CD4-positive, alpha-beta memory T cell (primary cell): ENCODE measurements at regions of chr17 and their contacts with region 1.

Region 1: GRCh38 chr17:17141860-17142552 is 64.1 kb downstream of the PLD6 start:
- DNase-seq: peak; percentile 54 to 65 (median 56)
- H3K4me3 ChIP-seq: no peak overlapping the region
- H3K4me3 Mint-ChIP-seq: peak overlapping the region in 4 of 8 donors; percentile 15 to 42 (median 36)
- H3K27ac ChIP-seq: no peak overlapping the region
- H3K27ac Mint-ChIP-seq: peak overlapping the region; percentile 22 to 94 (median 85)
- H3K4me1 ChIP-seq: peaks cover 9% of the 10 kb centered on the region
- H3K4me1 Mint-ChIP-seq: peaks cover 9 to 18% (median 9%) of the 10 kb centered on the region in 4 donors
- H3K27me3 ChIP-seq: no peaks in the 10 kb centered on the region
- H3K27me3 Mint-ChIP-seq: no peaks in the 10 kb centered on the region

Region 2: DNA sequence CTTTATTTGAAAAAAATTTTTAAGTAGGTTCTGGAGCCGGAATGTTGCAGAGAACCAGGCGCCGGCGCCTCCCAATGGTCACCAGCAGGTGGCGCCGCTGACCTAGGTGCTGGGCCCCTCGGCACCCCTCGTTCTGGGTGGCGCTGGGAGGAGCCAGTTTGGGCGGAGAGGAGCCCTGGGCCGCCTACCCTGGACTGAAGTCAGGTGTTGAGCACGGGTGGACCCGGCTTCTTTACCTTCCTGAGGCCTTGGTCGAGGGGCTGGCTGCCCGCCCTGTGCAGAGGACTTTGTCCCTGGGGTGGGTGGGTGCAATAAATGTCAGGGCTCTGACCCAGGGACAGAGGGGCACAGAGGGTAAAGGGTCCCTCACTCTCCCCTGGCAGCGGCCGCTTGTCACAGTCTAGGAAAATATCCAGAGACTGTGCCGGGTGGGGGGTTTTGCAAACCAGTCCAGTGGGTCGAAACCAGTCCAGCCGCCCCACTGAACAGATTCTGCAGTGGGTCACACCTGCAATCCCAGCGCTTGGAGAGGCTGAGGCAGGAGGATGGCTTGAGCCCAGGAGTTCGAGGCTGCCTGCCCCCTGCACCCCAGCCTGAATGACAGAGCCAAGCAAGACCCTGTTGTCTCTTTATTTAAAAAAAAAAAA is 140.0 kb before region 1 on chr17:
- CTCF ChIA-PET with region 1: interaction called, 10 read pairs
- POLR2A ChIA-PET with region 1: no interaction called
- intact Hi-C with region 1: loop called (anchors 5 kb)
- DNase-seq: peak; percentile 62 to 76 (median 70)
- H3K4me3 ChIP-seq: no peak overlapping the region
- H3K4me3 Mint-ChIP-seq: no peak overlapping the region
- H3K27ac ChIP-seq: no peak overlapping the region
- H3K27ac Mint-ChIP-seq: no peak overlapping the region
- H3K4me1 ChIP-seq: no peaks in the 10 kb centered on the region
- H3K4me1 Mint-ChIP-seq: peaks cover 1 to 4% (median 3%) of the 10 kb centered on the region in 4 donors
- H3K27me3 ChIP-seq: no peaks in the 10 kb centered on the region
- H3K27me3 Mint-ChIP-seq: no peaks in the 10 kb centered on the region

Region 3: GRCh38 chr17:17119533-17119932 is 22.5 kb before region 1 on chr17:
- CTCF ChIA-PET with region 1: interaction called, 17 read pairs
- POLR2A ChIA-PET with region 1: interaction called, 6 read pairs
- intact Hi-C with region 1: no loop called
- DNase-seq: peak; percentile 69 to 93 (median 81)
- H3K4me3 ChIP-seq: no peak overlapping the region
- H3K4me3 Mint-ChIP-seq: peak overlapping the region; percentile 10 to 79 (median 66)
- H3K27ac ChIP-seq: peak overlapping the region; percentile 66
- H3K27ac Mint-ChIP-seq: peak overlapping the region; percentile 93 to 96 (median 95)
- H3K4me1 ChIP-seq: peaks cover 93% of the 10 kb centered on the region
- H3K4me1 Mint-ChIP-seq: peaks cover 62 to 95% (median 84%) of the 10 kb centered on the region in 4 donors
- H3K27me3 ChIP-seq: no peaks in the 10 kb centered on the region
- H3K27me3 Mint-ChIP-seq: no peaks in the 10 kb centered on the region

Region 4: DNA sequence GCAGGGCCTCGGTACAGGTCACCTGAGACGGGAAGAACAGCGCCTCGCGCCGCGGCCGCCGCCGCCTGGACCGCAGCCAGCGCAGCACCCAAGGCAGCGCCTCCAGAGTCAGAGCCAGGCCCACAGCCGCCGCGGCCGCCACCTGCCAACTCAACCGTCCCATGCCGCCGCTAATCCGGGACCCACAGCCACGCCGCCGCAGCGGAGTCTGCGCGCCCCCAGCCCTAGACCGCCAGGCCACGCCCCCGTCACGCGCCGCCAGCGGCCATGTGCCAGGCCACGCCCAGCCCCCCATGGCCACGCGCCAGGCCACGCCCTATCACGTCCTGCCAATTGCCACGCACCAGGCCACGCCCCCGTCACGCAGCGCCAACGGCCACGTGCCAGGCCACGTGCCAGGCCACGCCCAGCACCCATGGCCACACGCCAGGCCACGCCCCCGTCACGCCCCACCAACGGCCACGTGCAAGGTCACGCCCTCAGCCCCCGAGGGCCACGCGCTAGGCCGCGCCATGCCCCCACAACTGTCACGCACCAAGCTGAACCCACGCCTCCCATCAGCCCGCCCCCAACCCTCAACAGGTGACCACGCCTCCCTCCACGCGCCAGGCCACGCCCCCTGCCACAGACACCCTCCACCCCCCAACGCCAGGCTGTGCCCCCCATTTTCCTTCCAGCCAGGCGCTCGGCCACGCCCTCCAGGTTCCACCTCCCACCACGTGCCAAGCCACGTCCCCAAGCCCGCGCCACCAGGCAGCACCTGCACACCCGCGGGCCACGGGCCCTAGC is 64.3 kb after region 1 on chr17 and contains the start of gene PLD6:
- CTCF ChIA-PET with region 1: interaction called, 9 read pairs
- POLR2A ChIA-PET with region 1: interaction called, 6 read pairs
- intact Hi-C with region 1: loop called (anchors 5 kb)
- DNase-seq: peak; percentile 94 to 95 (median 95)
- H3K4me3 ChIP-seq: peak within 1 kb of the TSS; percentile 61 to 72
- H3K4me3 Mint-ChIP-seq: peak within 1 kb of the TSS; percentile 85 to 94 (median 90)
- H3K27ac ChIP-seq: peak within 1 kb of the TSS; percentile 72
- H3K27ac Mint-ChIP-seq: peak within 1 kb of the TSS; percentile 91 to 97 (median 96)
- H3K4me1 ChIP-seq: peaks cover 28% of the 10 kb centered on the region
- H3K4me1 Mint-ChIP-seq: peaks cover 14 to 44% (median 31%) of the 10 kb centered on the region in 4 donors
- H3K27me3 ChIP-seq: no peaks in the 10 kb centered on the region
- H3K27me3 Mint-ChIP-seq: no peaks in the 10 kb centered on the region
- total RNA-seq, gene PLD6: 12.8 to 13.9 TPM

Region 5: GRCh38 chr17:17280613-17281549 is 138.9 kb after region 1 on chr17 and contains the start of gene COPS3:
- CTCF ChIA-PET with region 1: interaction called, 5 read pairs
- POLR2A ChIA-PET with region 1: interaction called, 3 read pairs
- intact Hi-C with region 1: loop called (anchors 1 kb)
- DNase-seq: peak; percentile 96 to 98 (median 97)
- H3K4me3 ChIP-seq: peak within 1 kb of the TSS; percentile 62 to 99
- H3K4me3 Mint-ChIP-seq: peak within 1 kb of the TSS; percentile 90 to 96 (median 94)
- H3K27ac ChIP-seq: peak within 1 kb of the TSS; percentile 89
- H3K27ac Mint-ChIP-seq: peak within 1 kb of the TSS; percentile 93 to 98 (median 96)
- H3K4me1 ChIP-seq: peaks cover 33% of the 10 kb centered on the region
- H3K4me1 Mint-ChIP-seq: peaks cover 24 to 55% (median 40%) of the 10 kb centered on the region in 4 donors
- H3K27me3 ChIP-seq: no peaks in the 10 kb centered on the region
- H3K27me3 Mint-ChIP-seq: no peaks in the 10 kb centered on the region
- total RNA-seq, gene COPS3: 45.4 to 60.5 TPM

Region 6: DNA sequence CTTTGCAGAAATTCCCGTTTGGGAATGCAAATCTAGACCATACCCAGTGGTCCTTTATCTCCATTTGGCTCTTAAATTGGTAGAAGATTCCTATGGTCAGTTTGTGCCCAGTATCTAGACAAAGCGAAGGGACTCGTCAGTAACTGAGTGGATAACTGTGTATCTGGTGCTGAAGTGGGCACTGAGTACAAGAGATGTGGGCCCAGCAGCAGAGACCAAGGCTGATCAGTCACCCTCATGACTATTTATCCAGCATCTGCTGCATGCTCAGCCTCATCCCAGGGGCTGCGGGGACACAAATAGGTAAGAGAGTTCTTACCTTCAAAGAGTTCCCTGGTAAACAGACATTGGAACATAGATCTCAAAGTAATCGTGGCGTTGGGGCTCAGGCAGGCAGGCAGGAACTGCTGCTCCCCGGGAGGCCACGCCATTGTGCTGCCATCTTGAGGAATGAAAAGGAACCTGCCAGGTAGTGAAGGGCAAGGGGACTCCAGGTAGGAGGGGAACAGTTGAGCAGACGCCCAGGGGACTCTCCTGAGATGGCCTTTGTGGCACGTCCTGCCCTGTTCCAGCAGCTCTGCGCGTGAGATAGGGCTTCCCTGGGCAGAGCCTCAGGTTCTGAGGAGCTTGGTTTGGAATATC is 171.5 kb after region 1 on chr17:
- CTCF ChIA-PET with region 1: interaction called, 49 read pairs
- POLR2A ChIA-PET with region 1: interaction called, 4 read pairs
- intact Hi-C with region 1: loop called (anchors 1 kb)
- DNase-seq: peak; percentile 71 to 77 (median 76)
- H3K4me3 ChIP-seq: no peak overlapping the region
- H3K4me3 Mint-ChIP-seq: peak overlapping the region in 1 of 8 donors; percentile 15
- H3K27ac ChIP-seq: no peak overlapping the region
- H3K27ac Mint-ChIP-seq: peak overlapping the region in 3 of 7 donors; percentile 66 to 70 (median 67)
- H3K4me1 ChIP-seq: peaks cover 3% of the 10 kb centered on the region
- H3K4me1 Mint-ChIP-seq: peaks cover 4 to 7% (median 6%) of the 10 kb centered on the region in 4 donors
- H3K27me3 ChIP-seq: no peaks in the 10 kb centered on the region
- H3K27me3 Mint-ChIP-seq: no peaks in the 10 kb centered on the region